MCF 10A (cell line): ENCODE measurements at regions of chr1 and their contacts with region 1.

Region 1: DNA sequence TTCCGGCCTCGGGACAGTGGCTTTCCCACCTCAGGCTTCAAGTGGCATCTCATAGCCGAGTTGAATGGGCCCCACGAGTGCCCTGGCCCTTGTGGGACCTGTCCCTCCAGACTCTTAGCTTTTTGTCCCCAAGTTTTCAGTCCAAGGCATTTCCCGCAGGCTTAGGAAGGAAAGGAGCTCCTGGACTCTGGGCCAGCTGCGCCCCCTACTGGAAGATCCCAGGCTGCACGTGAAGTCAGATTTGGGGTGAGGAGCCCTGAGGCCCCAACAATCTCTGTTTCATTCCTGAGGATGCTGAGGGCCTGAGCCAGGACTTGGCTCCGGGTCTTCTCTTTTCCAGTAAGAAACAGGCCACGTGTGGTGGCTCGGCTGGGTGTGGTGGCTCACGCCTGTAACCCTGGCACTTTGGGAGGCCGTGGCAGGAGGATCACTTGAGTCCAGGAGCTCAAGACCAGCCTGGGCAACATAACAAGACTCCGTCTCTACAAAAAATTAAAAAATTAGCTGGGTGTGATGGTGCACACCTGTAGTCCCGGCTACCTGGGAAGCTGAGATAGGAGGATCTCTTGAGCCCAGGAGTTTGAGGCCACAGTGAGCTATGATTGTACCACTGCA is 67.4 kb downstream of the ARHGEF10L start:
- DNase-seq: peak; percentile 78
- H3K4me3 Mint-ChIP-seq: no peak overlapping the region
- H3K27ac Mint-ChIP-seq: no peak overlapping the region
- H3K4me1 Mint-ChIP-seq: no peaks in the 10 kb centered on the region
- H3K27me3 Mint-ChIP-seq: no peaks in the 10 kb centered on the region
- CTCF ChIP-seq: peak; percentile 94

Region 2: DNA sequence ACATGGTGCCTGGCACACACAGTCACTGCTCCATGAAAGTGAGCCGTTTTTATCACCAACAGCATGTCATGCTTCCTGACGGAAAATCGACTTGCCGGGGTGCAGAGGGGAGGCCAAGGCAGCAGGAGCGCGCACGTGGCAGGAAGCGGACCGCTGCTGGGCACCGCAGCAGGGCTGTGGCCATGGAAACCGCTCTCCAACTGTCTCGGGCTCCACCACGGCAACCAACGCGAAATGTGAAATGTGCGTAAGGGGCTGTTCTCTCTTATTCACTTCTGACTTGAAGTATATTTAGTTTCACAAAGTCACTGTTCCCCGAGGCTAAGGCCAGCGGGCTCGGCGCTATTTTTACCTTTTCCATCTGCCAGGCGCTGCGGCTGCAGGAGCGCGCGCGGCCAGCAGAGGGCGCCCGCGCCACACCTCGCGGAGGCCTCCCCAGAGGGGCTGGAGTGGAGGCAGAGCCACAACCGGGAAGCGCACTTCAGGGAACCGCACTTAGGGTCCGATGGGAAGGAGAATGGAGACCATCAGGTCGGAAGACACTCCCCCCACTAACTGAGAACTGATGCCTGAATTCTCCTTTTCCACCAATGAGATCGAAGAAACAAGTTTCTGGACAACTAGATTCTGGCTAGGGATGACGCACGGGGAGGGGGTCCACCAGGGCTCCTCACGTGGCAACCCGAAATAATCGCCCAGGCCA is 187.2 kb before region 1 on chr1:
- CTCF ChIA-PET with region 1: interaction called, 12 read pairs
- POLR2A ChIA-PET with region 1: no interaction called
- intact Hi-C with region 1: loop called (anchors 1 kb)
- DNase-seq: peak; percentile 48
- H3K4me3 Mint-ChIP-seq: no peak overlapping the region
- H3K27ac Mint-ChIP-seq: no peak overlapping the region
- H3K4me1 Mint-ChIP-seq: no peaks in the 10 kb centered on the region
- H3K27me3 Mint-ChIP-seq: no peaks in the 10 kb centered on the region
- CTCF ChIP-seq: peak; percentile 99

Region 3: DNA sequence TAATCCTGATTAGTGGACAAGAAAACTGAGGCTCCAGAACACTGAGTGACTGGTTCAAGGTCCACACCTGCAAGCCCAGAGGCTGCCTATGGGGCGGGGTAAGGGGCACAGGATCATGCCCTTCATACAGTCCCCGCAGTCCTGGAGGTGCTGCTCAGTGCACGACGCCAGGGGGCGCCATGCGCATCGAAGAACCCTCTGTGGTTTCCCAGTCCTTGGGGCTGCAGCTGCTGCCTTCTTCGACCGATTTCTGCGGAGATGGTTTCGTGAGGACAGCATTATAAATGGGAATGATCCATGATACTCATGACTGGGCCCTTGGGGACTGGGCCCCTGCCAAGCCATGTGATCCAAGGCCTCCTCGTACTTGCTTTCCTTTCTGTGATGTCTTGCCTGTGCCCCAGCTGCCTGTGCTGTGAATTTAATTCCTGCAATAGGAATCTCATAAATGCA is 104.6 kb before region 1 on chr1:
- CTCF ChIA-PET with region 1: interaction called, 72 read pairs
- POLR2A ChIA-PET with region 1: interaction called, 3 read pairs
- intact Hi-C with region 1: loop called (anchors 1 kb)
- DNase-seq: peak; percentile 74
- H3K4me3 Mint-ChIP-seq: no peak overlapping the region
- H3K27ac Mint-ChIP-seq: no peak overlapping the region
- H3K4me1 Mint-ChIP-seq: peaks cover 5% of the 10 kb centered on the region
- H3K27me3 Mint-ChIP-seq: peaks cover 16% of the 10 kb centered on the region
- CTCF ChIP-seq: peak; percentile 93

Region 4: DNA sequence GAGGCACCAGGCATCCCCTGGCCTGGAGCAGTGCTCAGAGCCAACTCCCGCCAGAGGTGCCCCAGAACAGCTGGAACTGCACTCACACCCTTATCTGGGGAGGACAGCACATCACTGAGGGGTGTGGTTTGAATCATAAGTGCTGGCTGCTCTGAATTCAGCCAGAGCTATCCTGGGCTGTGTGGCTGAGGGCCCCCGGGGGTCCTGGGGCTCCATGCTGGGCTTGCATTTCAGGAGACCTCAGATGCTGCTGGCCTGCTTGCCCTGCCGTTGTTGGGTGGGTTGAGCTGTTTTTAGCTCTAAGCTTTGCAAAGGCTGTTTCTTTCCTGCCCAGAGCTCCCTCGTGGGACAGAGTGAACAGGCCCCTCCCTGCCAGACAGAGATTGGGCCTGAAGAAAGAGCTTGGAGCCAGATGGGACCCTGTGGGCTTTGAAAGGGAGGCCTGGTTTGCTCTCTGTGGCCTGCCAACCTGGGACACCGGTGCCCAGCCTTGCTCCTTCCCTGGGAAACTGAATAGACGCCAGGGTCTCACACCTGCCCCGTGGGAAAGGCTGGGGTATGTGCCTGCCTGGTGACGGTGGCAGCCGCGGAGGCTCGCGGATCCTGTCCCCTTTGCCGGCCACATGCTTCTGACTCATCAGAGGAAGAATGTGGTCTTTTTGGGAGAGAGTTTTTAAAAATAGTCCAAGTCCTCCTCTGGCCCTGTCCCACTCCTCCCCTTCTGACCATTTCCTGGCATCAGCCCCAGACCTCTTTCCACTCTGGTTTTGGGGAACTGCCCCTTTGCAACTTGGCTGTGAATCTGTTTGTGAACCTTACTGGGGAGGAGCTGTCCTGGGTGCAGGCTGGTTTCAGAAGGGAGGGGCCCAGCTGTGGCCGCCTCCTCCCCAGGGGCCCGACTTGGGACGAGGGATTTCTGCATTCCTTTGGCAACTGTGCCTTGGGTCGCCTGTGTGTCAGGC is 37.5 kb before region 1 on chr1:
- CTCF ChIA-PET with region 1: interaction called, 10 read pairs
- POLR2A ChIA-PET with region 1: no interaction called
- intact Hi-C with region 1: loop called (anchors 1 kb)
- DNase-seq: peak; percentile 87
- H3K4me3 Mint-ChIP-seq: peak overlapping the region; percentile 15
- H3K27ac Mint-ChIP-seq: peak overlapping the region; percentile 93
- H3K4me1 Mint-ChIP-seq: peaks cover 23% of the 10 kb centered on the region
- H3K27me3 Mint-ChIP-seq: no peaks in the 10 kb centered on the region
- CTCF ChIP-seq: no peak

Region 5: GRCh38 chr1:17596651-17597509 is 10.1 kb before region 1 on chr1:
- CTCF ChIA-PET with region 1: interaction called, 13 read pairs
- POLR2A ChIA-PET with region 1: interaction called, 3 read pairs
- intact Hi-C with region 1: no loop called
- DNase-seq: no peak
- H3K4me3 Mint-ChIP-seq: no peak overlapping the region
- H3K27ac Mint-ChIP-seq: no peak overlapping the region
- H3K4me1 Mint-ChIP-seq: peaks cover 18% of the 10 kb centered on the region
- H3K27me3 Mint-ChIP-seq: no peaks in the 10 kb centered on the region
- CTCF ChIP-seq: no peak

Region 6: DNA sequence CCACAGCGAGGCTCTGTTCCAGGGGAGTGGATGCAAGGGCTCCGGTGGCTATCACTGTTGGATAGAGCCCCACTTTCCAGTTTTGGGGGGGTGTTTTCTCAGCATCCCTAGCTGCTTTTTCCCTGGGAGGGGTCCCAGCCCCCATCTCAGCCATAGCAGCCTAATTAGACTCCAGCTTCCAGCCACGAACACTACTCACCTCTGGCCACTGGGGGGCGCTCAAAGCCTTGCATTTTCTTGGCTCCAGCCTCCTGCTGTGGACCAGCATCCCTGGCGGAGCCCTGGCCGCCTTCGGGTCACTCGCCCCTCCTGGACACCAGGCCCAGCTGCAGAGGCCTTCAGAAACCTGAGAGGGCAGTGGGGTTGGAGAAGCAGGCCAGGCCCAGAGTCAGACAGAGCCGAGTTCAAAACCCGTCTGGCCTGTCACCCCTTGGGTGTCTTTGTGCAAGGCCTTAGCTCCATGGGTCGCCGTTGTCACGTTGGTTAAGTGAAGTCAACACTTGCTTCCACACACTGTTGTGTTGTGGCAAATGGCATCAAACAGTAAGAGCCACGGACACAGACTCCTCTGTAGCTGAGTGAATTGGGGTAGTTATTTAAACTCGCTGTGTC is 54.7 kb after region 1 on chr1:
- CTCF ChIA-PET with region 1: no interaction called
- POLR2A ChIA-PET with region 1: no interaction called
- intact Hi-C with region 1: no loop called
- DNase-seq: peak; percentile 73
- H3K4me3 Mint-ChIP-seq: no peak overlapping the region
- H3K27ac Mint-ChIP-seq: no peak overlapping the region
- H3K4me1 Mint-ChIP-seq: no peaks in the 10 kb centered on the region
- H3K27me3 Mint-ChIP-seq: no peaks in the 10 kb centered on the region
- CTCF ChIP-seq: peak; percentile 93

Region 7: GRCh38 chr1:17790383-17791054 is 183.6 kb after region 1 on chr1:
- CTCF ChIA-PET with region 1: no interaction called
- POLR2A ChIA-PET with region 1: no interaction called
- intact Hi-C with region 1: no loop called
- DNase-seq: no peak
- H3K4me3 Mint-ChIP-seq: no peak overlapping the region
- H3K27ac Mint-ChIP-seq: no peak overlapping the region
- H3K4me1 Mint-ChIP-seq: no peaks in the 10 kb centered on the region
- H3K27me3 Mint-ChIP-seq: peaks cover 52% of the 10 kb centered on the region
- CTCF ChIP-seq: no peak